BJ (cell line): ENCODE measurements at regions of chr17 and their contacts with region 1.

Region 1: DNA sequence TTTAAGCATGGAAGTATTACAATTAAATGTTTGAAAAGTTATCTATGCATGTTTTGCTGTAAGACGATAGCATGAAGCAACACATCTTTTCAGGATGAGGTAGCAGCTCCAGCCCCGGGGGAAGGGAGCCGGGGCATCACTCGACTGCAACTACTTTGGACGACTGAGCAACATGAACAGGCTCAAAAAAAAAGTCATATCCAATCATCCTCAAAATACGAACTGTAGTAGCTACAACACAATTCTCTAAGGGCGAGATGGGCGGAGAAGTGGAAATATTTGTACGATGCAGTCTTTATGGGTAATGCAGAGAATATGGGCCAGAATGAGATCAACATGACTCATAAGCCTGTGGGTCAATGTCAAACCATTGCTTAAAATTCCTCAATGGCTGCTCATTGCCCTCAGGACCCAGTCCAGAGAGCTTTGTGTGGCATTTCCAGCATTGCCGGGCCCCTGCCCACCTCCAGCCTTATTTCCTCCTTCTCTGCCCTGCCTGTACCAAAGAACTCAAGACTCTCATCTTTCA is 17.6 kb upstream of the SMURF2 start:
- DNase-seq: peak; percentile 99
- H3K4me3 ChIP-seq: no peak overlapping the region
- H3K27me3 ChIP-seq: no peaks in the 10 kb centered on the region
- CTCF ChIP-seq: no peak

Region 2: DNA sequence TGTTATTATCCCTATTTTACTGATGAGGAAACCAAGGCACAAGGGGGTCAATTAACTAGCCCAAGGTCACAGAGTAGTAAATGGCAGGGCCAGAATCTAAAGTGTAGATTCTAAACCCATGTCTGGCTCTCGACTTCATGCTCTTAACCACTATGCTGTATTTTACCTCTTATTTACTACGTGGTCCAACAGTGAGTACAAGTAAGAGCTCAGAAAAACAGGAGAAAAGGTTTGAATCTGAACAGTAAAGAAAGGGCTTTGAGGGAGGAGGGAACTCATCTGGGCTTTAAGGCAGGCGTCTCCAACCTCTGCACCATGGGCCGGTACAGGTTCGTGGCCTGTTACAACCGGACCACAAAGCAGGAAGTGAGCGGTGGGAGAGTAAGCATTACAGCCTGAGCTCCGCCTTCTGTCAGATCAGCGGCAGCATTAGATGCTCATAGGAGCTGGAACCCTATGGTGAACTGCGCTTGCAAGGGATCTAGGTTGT is 80.5 kb before region 1 on chr17:
- CTCF ChIA-PET with region 1: no interaction called
- POLR2A ChIA-PET with region 1: no interaction called
- DNase-seq: no peak
- H3K4me3 ChIP-seq: no peak overlapping the region
- H3K27me3 ChIP-seq: no peaks in the 10 kb centered on the region
- CTCF ChIP-seq: no peak

Region 3: DNA sequence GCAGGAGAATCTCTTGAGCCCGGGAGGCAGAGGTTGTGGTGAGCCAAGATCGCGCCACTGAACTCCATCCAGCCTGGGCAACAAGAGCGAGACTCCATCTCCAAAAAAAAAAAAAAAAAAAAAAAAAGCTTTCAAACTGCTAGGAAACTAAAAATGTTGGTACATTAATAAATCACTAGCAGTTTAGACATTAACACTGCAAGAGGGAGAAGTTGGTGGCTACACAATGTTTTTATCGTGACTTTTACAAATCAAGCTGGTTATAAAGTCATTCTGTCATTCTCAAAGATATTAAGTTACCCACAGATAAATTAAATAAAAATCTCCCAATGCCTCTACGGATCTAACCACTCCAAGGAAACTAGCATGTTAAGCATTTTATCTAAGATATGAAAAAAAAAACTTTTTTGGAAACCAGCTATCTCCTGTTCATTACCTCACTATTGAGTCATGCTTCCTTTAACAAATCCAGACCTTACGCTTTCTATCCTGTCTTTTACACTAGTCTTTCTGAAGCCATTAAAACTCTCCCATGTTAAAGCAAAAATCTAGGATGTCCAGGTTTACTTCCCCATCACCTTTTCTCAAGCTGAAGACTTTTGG is 68.3 kb after region 1 on chr17:
- CTCF ChIA-PET with region 1: interaction called, 4 read pairs
- POLR2A ChIA-PET with region 1: interaction called, 13 read pairs
- DNase-seq: peak; percentile 21
- H3K4me3 ChIP-seq: no peak overlapping the region
- H3K27me3 ChIP-seq: no peaks in the 10 kb centered on the region
- CTCF ChIP-seq: no peak

Region 4: GRCh38 chr17:64769712-64770111 is 90.0 kb after region 1 on chr17:
- CTCF ChIA-PET with region 1: no interaction called
- POLR2A ChIA-PET with region 1: no interaction called
- DNase-seq: no peak
- H3K4me3 ChIP-seq: no peak overlapping the region
- H3K27me3 ChIP-seq: no peaks in the 10 kb centered on the region
- CTCF ChIP-seq: no peak

Region 5: DNA sequence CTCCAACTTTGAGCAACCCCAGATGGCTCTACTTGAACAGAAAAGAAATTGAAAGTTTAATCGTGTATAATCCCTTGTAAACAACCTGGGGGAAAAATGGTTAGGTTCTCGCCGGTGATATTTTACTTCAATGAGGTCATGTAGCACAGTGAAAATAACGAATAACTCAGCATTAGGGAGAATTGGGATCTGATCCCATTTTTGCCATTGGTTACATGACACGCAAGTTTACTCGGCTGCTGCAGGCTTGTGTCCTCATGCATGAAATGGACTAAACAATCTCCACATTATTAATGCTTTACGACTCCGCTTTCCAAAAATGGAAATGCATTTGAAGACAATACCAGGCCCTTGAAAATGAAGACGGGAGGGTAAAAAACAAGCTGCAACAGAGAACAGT is 285.0 kb after region 1 on chr17:
- CTCF ChIA-PET with region 1: no interaction called
- POLR2A ChIA-PET with region 1: no interaction called
- DNase-seq: no peak
- H3K4me3 ChIP-seq: no peak overlapping the region
- H3K27me3 ChIP-seq: no peaks in the 10 kb centered on the region
- CTCF ChIP-seq: no peak